K562 (cell line): ENCODE measurements at regions of chr3 and their contacts with region 1.

Region 1: DNA sequence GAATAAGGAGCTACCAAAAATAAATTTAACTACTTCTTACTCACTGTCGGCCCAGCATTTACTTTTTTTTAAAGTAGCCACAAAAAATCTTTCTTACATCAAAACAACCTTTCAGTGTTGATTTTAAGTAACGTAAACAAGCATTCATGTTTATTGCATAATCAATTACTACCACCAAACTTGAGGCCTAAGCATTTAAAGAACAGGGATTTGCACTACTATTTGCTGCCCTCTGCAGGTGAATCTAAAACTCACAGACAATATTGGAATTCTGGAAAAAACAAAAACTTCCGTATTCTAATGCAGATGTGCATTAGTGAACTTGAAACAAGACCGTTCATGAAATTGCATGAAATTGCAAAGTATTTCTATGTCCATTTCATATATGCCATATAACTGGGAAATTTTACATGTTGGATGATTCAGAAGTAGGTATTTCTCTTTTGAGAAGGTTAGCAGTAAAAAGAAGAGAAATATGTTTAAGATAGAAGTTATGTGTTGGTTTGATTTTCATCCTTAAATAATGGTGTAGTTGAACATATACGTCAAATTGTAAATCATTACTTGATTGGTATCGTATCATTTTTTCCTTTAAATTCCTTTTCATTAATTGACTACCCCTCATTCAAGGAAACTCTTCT is 55.6 kb downstream of the CGGBP1 start:
- DNase-seq: peak; percentile 11 to 60 (median 19)
- ATAC-seq: peak; percentile 61; the same call in 2 of the 3 replicates
- H3K4me3 ChIP-seq: no peak overlapping the region
- H3K27ac ChIP-seq: no peak overlapping the region
- H3K4me1 ChIP-seq: no peaks in the 10 kb centered on the region
- H3K27me3 ChIP-seq: no peaks in the 10 kb centered on the region
- CTCF ChIP-seq: peak; percentile 34 to 68 (median 55); a peak in 5 of 6 replicates
- EP300 ChIP-seq: no peak
- POLR2A ChIP-seq: no peak
- RAD21 ChIP-seq: peak; percentile 81 to 91

Region 2: GRCh38 chr3:86774082-86774691 is 1229.0 kb before region 1 on chr3:
- CTCF ChIA-PET with region 1: no interaction called
- POLR2A ChIA-PET with region 1: no interaction called
- in situ Hi-C with region 1: no loop called
- intact Hi-C with region 1: loop called (anchors 10 kb)
- DNase-seq: peak in 2 of 4 experiments; percentile 1 to 11
- ATAC-seq: no peak
- H3K4me3 ChIP-seq: no peak overlapping the region
- H3K27ac ChIP-seq: no peak overlapping the region
- H3K4me1 ChIP-seq: no peaks in the 10 kb centered on the region
- H3K27me3 ChIP-seq: no peaks in the 10 kb centered on the region
- CTCF ChIP-seq: peak in 1 of 3 experiments; percentile 40; a peak in 2 of 6 replicates
- EP300 ChIP-seq: no peak
- POLR2A ChIP-seq: no peak
- RAD21 ChIP-seq: peak; percentile 34 to 52

Region 3: GRCh38 chr3:87272718-87273341 is 730.4 kb before region 1 on chr3:
- CTCF ChIA-PET with region 1: no interaction called
- POLR2A ChIA-PET with region 1: no interaction called
- in situ Hi-C with region 1: no loop called
- intact Hi-C with region 1: no loop called
- DNase-seq: no peak
- ATAC-seq: no peak
- H3K4me3 ChIP-seq: no peak overlapping the region
- H3K27ac ChIP-seq: no peak overlapping the region
- H3K4me1 ChIP-seq: no peaks in the 10 kb centered on the region
- H3K27me3 ChIP-seq: no peaks in the 10 kb centered on the region
- CTCF ChIP-seq: no peak
- EP300 ChIP-seq: no peak
- POLR2A ChIP-seq: no peak
- RAD21 ChIP-seq: no peak

Region 4: GRCh38 chr3:87298111-87298718 is 705.0 kb before region 1 on chr3:
- CTCF ChIA-PET with region 1: interaction called, 13 read pairs
- POLR2A ChIA-PET with region 1: no interaction called
- in situ Hi-C with region 1: loop called (anchors 25 kb)
- intact Hi-C with region 1: loop called (anchors 1 kb)
- DNase-seq: peak; percentile 16 to 29 (median 20)
- ATAC-seq: peak; percentile 77
- H3K4me3 ChIP-seq: no peak overlapping the region
- H3K27ac ChIP-seq: no peak overlapping the region
- H3K4me1 ChIP-seq: no peaks in the 10 kb centered on the region
- H3K27me3 ChIP-seq: no peaks in the 10 kb centered on the region
- CTCF ChIP-seq: peak; percentile 33 to 64 (median 34); a peak in 4 of 6 replicates
- EP300 ChIP-seq: no peak
- POLR2A ChIP-seq: no peak
- RAD21 ChIP-seq: peak; percentile 68 to 70

Region 5: GRCh38 chr3:87350364-87351199 is 652.7 kb before region 1 on chr3:
- CTCF ChIA-PET with region 1: interaction called, 6 read pairs
- POLR2A ChIA-PET with region 1: no interaction called
- in situ Hi-C with region 1: no loop called
- intact Hi-C with region 1: loop called (anchors 1 kb)
- DNase-seq: peak; percentile 40 to 48 (median 43)
- ATAC-seq: peak; percentile 92
- H3K4me3 ChIP-seq: no peak overlapping the region
- H3K27ac ChIP-seq: no peak overlapping the region
- H3K4me1 ChIP-seq: no peaks in the 10 kb centered on the region; a peak in 1 of 5 replicates
- H3K27me3 ChIP-seq: no peaks in the 10 kb centered on the region
- CTCF ChIP-seq: peak; percentile 53 to 73 (median 55)
- EP300 ChIP-seq: no peak
- POLR2A ChIP-seq: no peak
- RAD21 ChIP-seq: peak; percentile 66 to 74

Region 6: DNA sequence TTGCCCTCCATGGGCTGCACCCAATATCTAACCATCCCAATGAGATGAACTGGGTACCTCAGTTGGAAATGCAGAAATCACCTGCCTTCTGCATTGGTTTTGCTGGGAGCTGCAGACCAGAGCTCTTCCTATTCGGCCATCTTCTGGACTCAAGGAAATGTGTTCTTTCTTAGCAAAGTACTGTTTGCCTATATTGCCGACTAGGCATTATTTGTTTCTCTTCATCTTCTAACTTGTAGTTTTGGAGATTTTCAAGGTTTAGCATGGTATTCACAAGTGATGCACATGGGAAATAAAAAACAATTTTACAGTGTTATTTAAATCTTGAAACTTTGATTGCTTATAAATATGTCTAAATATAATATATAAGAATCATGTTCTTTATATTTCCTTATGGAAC is 349.1 kb before region 1 on chr3:
- CTCF ChIA-PET with region 1: no interaction called
- POLR2A ChIA-PET with region 1: no interaction called
- in situ Hi-C with region 1: no loop called
- intact Hi-C with region 1: loop called (anchors 10 kb)
- DNase-seq: no peak
- ATAC-seq: no peak
- H3K4me3 ChIP-seq: no peak overlapping the region
- H3K27ac ChIP-seq: no peak overlapping the region
- H3K4me1 ChIP-seq: no peaks in the 10 kb centered on the region
- H3K27me3 ChIP-seq: no peaks in the 10 kb centered on the region
- CTCF ChIP-seq: no peak
- EP300 ChIP-seq: no peak
- POLR2A ChIP-seq: no peak
- RAD21 ChIP-seq: no peak

Region 7: GRCh38 chr3:87792534-87793336 is 210.5 kb before region 1 on chr3:
- CTCF ChIA-PET with region 1: no interaction called
- POLR2A ChIA-PET with region 1: no interaction called
- in situ Hi-C with region 1: no loop called
- intact Hi-C with region 1: loop called (anchors 5 kb)
- DNase-seq: peak; percentile 46 to 69 (median 52)
- ATAC-seq: peak; percentile 74
- H3K4me3 ChIP-seq: peak within 1 kb of the TSS; percentile 76
- H3K27ac ChIP-seq: peak within 1 kb of the TSS; percentile 84
- H3K4me1 ChIP-seq: peaks cover 5 to 15% of the 10 kb centered on the region in 2 experiments; a peak in 3 of 5 replicates
- H3K27me3 ChIP-seq: no peaks in the 10 kb centered on the region
- CTCF ChIP-seq: peak; percentile 36 to 74 (median 50); a peak in 5 of 6 replicates
- EP300 ChIP-seq: no peak
- POLR2A ChIP-seq: no peak; the same call in 1 of the 2 replicates
- RAD21 ChIP-seq: peak; percentile 27 to 44; a peak in 2 of 4 replicates

Region 8: GRCh38 chr3:87949189-87949878 is 53.9 kb before region 1 on chr3:
- CTCF ChIA-PET with region 1: no interaction called
- POLR2A ChIA-PET with region 1: no interaction called
- in situ Hi-C with region 1: no loop called
- intact Hi-C with region 1: no loop called
- DNase-seq: no peak
- ATAC-seq: no peak
- H3K4me3 ChIP-seq: no peak overlapping the region
- H3K27ac ChIP-seq: no peak overlapping the region
- H3K4me1 ChIP-seq: no peaks in the 10 kb centered on the region
- H3K27me3 ChIP-seq: no peaks in the 10 kb centered on the region
- CTCF ChIP-seq: no peak
- EP300 ChIP-seq: no peak
- POLR2A ChIP-seq: no peak
- RAD21 ChIP-seq: no peak

Region 9: GRCh38 chr3:88180398-88180999 is 177.3 kb after region 1 on chr3:
- CTCF ChIA-PET with region 1: interaction called, 3 read pairs
- POLR2A ChIA-PET with region 1: no interaction called
- in situ Hi-C with region 1: no loop called
- intact Hi-C with region 1: loop called (anchors 2 kb)
- DNase-seq: peak in 2 of 4 experiments; percentile 16 to 60
- ATAC-seq: peak; percentile 86
- H3K4me3 ChIP-seq: no peak overlapping the region
- H3K27ac ChIP-seq: no peak overlapping the region
- H3K4me1 ChIP-seq: no peaks in the 10 kb centered on the region
- H3K27me3 ChIP-seq: no peaks in the 10 kb centered on the region
- CTCF ChIP-seq: peak; percentile 30 to 50 (median 45); a peak in 5 of 6 replicates
- EP300 ChIP-seq: no peak
- POLR2A ChIP-seq: no peak
- RAD21 ChIP-seq: peak; percentile 54 to 76

Region 10: DNA sequence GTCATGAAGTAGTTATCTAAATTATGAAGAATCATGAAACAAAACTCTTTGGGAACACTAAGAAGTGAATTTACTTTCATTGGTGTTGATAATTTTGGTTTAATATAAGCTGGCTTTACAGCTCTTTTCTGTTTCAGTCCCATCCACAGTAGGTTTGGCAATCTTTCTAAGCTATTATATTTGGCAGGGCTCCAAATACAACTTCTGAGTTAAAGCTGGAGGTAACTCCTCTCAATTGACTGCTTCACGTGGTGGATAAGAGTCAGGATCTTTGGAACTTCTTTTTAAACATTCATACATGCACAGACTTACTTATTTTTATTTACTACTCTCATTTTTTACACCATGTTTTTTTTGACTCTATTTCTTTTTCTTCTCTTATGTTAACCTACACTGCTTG is 997.7 kb after region 1 on chr3:
- CTCF ChIA-PET with region 1: no interaction called
- POLR2A ChIA-PET with region 1: no interaction called
- in situ Hi-C with region 1: no loop called
- intact Hi-C with region 1: no loop called
- DNase-seq: no peak
- ATAC-seq: no peak
- H3K4me3 ChIP-seq: no peak overlapping the region
- H3K27ac ChIP-seq: no peak overlapping the region
- H3K4me1 ChIP-seq: no peaks in the 10 kb centered on the region
- H3K27me3 ChIP-seq: no peaks in the 10 kb centered on the region
- CTCF ChIP-seq: no peak
- EP300 ChIP-seq: no peak
- POLR2A ChIP-seq: no peak
- RAD21 ChIP-seq: no peak